ENCODE measurements at regions of chr12 and their contacts with region 1.

Region 1: DNA sequence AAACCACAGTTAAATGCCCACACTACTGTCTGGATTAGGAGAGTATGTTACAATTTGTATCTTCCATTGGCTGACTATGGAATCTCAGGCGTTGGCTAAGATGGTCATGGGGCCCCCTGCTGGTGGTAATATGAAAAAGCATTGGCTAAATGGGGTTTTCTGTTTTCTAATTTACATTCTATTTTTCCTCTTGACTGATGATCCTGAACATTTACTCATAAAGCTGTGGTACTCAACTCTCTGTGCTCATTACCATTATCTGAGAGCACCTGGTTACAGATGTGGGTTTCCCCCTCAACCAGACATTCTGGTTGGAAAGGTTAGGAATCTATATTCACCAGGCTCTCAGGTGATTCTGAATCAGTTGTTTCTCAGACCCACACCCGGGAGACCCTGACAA is 64.8 kb downstream of the WSCD2 start:
- DNase-seq: peak; percentile 61 to 69 (median 68)
- ATAC-seq: peak; percentile 64; the same call in 2 of the 3 replicates
- H3K4me3 ChIP-seq: no peak overlapping the region
- H3K27ac ChIP-seq: no peak overlapping the region
- H3K4me1 ChIP-seq: no peaks in the 10 kb centered on the region
- H3K27me3 ChIP-seq: no peaks in the 10 kb centered on the region; a peak in 1 of 5 replicates
- CTCF ChIP-seq: peak; percentile 73 to 92 (median 76)
- EP300 ChIP-seq: no peak
- POLR2A ChIP-seq: no peak
- RAD21 ChIP-seq: peak; percentile 87 to 93

Region 2: DNA sequence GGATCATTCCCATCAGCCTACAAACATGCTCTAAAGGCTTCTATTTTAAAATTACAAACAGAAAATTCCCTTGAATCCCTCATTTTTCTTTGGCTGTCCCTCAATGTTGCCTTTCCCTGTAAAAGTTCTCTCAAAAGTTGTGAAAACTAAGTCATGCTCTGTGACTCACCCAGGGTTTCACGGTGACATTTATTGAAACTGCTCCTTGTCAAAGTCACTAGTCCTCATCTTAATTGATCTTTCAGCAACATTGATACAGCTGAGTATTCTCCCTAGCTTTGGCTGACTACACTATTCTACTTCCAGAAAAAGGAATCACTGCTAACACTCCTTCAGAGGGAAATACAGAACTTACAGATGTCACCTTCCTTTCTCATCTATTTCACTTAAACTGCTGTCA is 353.7 kb before region 1 on chr12:
- CTCF ChIA-PET with region 1: no interaction called
- POLR2A ChIA-PET with region 1: no interaction called
- in situ Hi-C with region 1: no loop called
- intact Hi-C with region 1: no loop called
- DNase-seq: no peak
- ATAC-seq: no peak
- H3K4me3 ChIP-seq: no peak overlapping the region
- H3K27ac ChIP-seq: no peak overlapping the region
- H3K4me1 ChIP-seq: peaks cover 0 to 16% of the 10 kb centered on the region in 2 experiments; a peak in 1 of 5 replicates
- H3K27me3 ChIP-seq: peaks cover 21 to 23% of the 10 kb centered on the region in 2 experiments; a peak in 4 of 5 replicates
- CTCF ChIP-seq: no peak
- EP300 ChIP-seq: no peak
- POLR2A ChIP-seq: no peak
- RAD21 ChIP-seq: no peak

Region 3: DNA sequence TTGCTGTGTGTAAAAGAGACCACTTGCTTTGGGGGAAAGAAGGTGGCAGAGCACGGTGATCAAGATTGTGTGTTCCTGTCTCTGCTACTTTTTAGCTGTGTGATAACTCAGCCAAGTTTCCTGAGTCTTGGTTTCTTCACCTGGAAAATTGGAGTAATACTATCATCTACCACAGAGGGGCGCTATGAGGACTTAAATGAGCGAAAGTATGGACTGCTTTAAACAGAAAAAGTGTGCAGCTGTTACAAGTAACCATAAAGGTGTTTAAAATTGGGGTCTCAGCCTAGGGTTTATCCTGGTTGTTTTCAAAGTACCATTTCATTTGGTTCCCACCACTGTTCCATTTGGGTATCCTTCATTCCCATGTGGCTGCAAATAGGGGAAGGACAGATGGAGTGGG is 130.7 kb before region 1 on chr12:
- CTCF ChIA-PET with region 1: interaction called, 7 read pairs
- POLR2A ChIA-PET with region 1: no interaction called
- in situ Hi-C with region 1: no loop called
- intact Hi-C with region 1: loop called (anchors 2 kb)
- DNase-seq: peak; percentile 39 to 66 (median 45)
- ATAC-seq: peak; percentile 78
- H3K4me3 ChIP-seq: no peak overlapping the region
- H3K27ac ChIP-seq: no peak overlapping the region
- H3K4me1 ChIP-seq: no peaks in the 10 kb centered on the region
- H3K27me3 ChIP-seq: peaks cover 0 to 3% of the 10 kb centered on the region in 2 experiments; a peak in 2 of 5 replicates
- CTCF ChIP-seq: peak; percentile 67 to 82 (median 80); a peak in 5 of 6 replicates
- EP300 ChIP-seq: no peak
- POLR2A ChIP-seq: no peak
- RAD21 ChIP-seq: peak; percentile 65 to 86

Region 4: DNA sequence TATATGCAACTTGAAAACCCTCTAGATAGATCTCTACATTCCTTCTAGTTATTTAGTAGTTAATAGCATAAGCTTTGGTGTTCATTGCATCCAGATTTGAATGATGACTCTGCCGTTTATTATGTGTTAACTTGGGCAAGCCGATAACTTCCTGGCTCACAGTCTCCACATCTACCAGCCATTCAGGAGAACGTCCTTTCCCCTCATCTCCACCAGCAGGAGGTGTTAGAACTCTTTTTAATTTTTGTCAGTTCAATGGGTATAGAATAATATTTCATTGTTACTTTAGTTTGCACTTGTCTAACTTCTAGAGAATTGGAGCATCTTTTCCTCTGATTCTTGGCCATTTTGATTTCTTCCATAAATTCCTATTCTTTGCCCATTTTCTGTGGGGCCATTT is 94.8 kb before region 1 on chr12:
- CTCF ChIA-PET with region 1: interaction called, 21 read pairs
- POLR2A ChIA-PET with region 1: interaction called, 4 read pairs
- in situ Hi-C with region 1: loop called (anchors 5 kb)
- intact Hi-C with region 1: loop called (anchors 1 kb)
- DNase-seq: peak in 2 of 4 experiments; percentile 27 to 58
- ATAC-seq: peak; percentile 78
- H3K4me3 ChIP-seq: no peak overlapping the region
- H3K27ac ChIP-seq: no peak overlapping the region
- H3K4me1 ChIP-seq: peaks cover 4 to 15% of the 10 kb centered on the region in 2 experiments; a peak in 4 of 5 replicates
- H3K27me3 ChIP-seq: peaks cover 3 to 6% of the 10 kb centered on the region in 2 experiments; a peak in 3 of 5 replicates
- CTCF ChIP-seq: peak; percentile 60 to 84 (median 62); a peak in 5 of 6 replicates
- EP300 ChIP-seq: no peak
- POLR2A ChIP-seq: no peak
- RAD21 ChIP-seq: peak; percentile 71 to 86

Measured in K562 (cell line).